T-cell (primary cell): ENCODE measurements at regions of chr1 and their contacts with region 1.

Region 1: DNA sequence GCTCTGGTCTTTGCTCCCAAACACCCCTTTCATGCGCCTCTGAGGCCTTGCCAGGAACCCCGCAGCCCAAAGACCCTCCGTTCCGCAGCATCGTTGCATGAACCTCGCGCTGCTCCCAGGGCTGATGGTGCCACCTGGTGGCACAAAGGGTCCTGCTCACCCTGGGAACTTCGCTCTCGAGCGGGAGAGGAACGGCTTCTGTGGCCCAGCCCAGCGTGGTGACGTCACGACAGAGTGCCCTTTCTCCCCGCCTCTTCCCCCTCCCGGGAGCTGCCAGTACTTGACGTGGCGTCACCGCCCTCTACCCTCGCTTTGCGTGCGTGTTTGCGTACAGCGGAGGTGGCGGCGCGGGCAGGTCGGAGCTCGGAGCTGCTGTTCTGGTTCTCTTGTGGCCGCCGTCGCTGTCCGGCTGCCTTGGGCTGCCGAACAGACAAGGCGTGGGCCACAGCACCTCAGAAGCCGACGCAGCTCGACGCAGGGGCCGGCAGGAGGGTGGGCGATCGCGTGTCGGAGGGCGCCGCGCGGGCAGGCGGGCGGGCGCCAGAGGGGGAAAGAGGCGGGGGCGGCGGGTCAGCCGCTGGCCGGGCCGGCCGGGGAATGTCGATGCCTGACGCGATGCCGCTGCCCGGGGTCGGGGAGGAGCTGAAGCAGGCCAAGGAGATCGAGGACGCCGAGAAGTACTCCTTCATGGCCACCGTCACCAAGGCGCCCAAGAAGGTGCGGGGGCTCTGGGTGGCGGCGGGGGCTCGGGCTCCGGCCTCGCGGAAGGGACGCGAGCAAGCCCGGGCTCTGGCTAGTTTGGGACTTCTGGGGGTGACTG is at the start of gene AHCYL1:
- DNase-seq: peak; percentile 97 to 100 (median 99)
- ATAC-seq: peak; percentile 98 to 99 (median 99)
- H3K4me3 ChIP-seq: peak within 1 kb of the TSS; percentile 87 to 88
- H3K4me3 Mint-ChIP-seq: peak within 1 kb of the TSS; percentile 97 to 98 (median 98)
- H3K27ac ChIP-seq: peak within 1 kb of the TSS; percentile 62
- H3K27ac Mint-ChIP-seq: peak within 1 kb of the TSS; percentile 95 to 98
- H3K4me1 ChIP-seq: peaks cover 13 to 17% of the 10 kb centered on the region in 2 experiments
- H3K4me1 Mint-ChIP-seq: peaks cover 28 to 43% (median 42%) of the 10 kb centered on the region in 3 donors
- H3K27me3 ChIP-seq: no peaks in the 10 kb centered on the region
- H3K27me3 Mint-ChIP-seq: no peaks in the 10 kb centered on the region
- total RNA-seq, gene AHCYL1: 23.0 to 41.6 (median 38.9) TPM

Region 2: DNA sequence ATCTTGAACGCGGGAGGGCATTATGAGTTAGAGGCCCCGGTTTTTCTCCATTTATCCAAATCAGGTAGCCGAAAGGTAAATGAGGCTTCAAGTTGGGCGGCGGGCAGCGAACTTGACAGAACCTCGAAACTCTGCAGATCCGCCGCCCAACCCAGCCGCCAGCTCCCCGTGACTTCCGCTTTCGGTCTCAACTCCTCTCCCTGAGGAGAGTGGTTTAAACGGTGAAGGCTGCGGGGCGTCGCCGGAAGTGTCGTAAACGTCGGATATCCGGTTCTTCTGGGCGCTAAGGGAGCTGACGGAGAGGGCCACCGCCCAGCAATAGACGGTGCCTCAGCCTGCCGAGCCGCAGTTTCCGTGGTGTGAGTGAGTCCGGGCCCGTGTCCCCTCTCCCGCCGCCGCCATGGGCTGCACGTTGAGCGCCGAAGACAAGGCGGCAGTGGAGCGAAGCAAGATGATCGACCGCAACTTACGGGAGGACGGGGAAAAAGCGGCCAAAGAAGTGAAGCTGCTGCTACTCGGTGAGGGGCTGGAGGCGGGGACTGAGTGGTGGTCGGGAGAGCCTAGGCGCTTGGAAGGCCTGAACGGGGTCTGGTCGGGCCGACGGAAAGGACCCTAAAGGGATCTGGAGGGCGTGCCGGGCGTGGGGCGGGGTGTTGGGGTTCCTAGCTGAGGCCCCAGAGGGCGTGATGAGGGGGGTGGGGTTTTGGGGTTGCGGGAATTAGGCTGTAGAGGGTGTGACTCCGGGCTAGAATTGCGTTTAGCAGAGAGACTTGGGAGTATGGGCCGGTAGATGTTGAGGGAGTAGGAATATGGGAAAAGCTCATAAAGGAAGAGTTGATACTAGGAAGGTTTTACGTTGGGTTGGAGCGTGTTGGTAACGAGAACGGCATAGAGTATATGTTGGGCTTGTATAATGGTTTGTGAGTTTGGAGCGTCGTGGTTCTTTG is 436.1 kb before region 1 on chr1 and contains the start of gene GNAI3:
- CTCF ChIA-PET with region 1: interaction called, 3 to 20 read pairs
- POLR2A ChIA-PET with region 1: no interaction called
- DNase-seq: peak; percentile 89 to 99 (median 96)
- ATAC-seq: peak; percentile 93 to 95 (median 94)
- H3K4me3 ChIP-seq: peak within 1 kb of the TSS; percentile 83 to 93
- H3K4me3 Mint-ChIP-seq: peak within 1 kb of the TSS; percentile 90 to 99 (median 95)
- H3K27ac ChIP-seq: peak within 1 kb of the TSS; percentile 80
- H3K27ac Mint-ChIP-seq: peak within 1 kb of the TSS; percentile 98 to 99
- H3K4me1 ChIP-seq: peaks cover 7 to 30% of the 10 kb centered on the region in 2 experiments
- H3K4me1 Mint-ChIP-seq: peaks cover 59 to 63% (median 61%) of the 10 kb centered on the region in 3 donors
- H3K27me3 ChIP-seq: no peaks in the 10 kb centered on the region
- H3K27me3 Mint-ChIP-seq: no peaks in the 10 kb centered on the region
- total RNA-seq, gene GNAI3: 5.4 to 7.2 (median 6.5) TPM

Region 3: GRCh38 chr1:109640285-109640865 is 344.3 kb before region 1 on chr1:
- CTCF ChIA-PET with region 1: interaction called, 8 to 33 read pairs
- POLR2A ChIA-PET with region 1: no interaction called
- DNase-seq: peak; percentile 58 to 95 (median 85)
- ATAC-seq: peak; percentile 70 to 87 (median 74)
- H3K4me3 ChIP-seq: no peak overlapping the region
- H3K4me3 Mint-ChIP-seq: no peak overlapping the region
- H3K27ac ChIP-seq: no peak overlapping the region
- H3K27ac Mint-ChIP-seq: peak overlapping the region in 1 of 2 donors; percentile 57
- H3K4me1 ChIP-seq: peaks cover 0 to 20% of the 10 kb centered on the region in 2 experiments
- H3K4me1 Mint-ChIP-seq: peaks cover 6 to 17% (median 14%) of the 10 kb centered on the region in 3 donors
- H3K27me3 ChIP-seq: peaks cover 0 to 23% of the 10 kb centered on the region in 2 experiments
- H3K27me3 Mint-ChIP-seq: no peaks in the 10 kb centered on the region

Region 4: DNA sequence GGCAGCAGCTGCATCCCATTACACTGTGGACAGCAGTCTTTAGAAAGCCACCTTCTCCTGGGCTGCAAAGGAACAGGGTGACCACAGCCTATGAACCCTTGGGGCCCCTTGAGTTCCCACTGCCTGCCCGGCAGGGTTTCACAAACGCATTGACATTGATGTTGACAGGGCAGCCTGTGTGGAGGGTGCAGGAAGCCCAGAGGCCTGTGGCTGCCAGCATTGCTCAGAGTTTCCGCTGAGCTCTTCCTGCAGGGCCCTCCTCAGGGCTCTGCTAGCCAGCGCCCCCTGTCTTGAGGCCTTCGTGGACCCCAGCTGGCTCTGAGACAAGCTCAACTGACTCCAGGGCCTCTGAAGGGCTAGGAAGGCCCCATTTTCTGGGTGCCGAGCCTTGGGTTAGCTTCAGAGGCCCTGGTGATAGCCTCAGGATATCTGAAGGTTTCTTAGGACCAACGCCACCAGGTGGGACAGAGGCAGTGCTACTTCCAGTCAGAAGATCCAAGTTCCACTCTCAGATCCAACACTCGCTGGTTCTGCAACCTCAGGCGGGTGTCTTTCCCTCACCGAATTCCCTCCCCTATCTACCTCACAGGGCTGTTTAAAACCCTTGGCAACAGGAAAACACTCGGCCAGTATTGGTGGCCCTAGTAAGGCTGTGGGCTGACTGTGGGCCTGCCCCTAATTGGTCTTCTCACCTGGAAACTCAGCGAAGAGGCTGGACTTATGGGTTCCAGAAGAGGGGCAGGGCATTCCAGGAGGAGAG is 193.8 kb before region 1 on chr1:
- CTCF ChIA-PET with region 1: interaction called, 5 to 20 read pairs
- POLR2A ChIA-PET with region 1: no interaction called
- DNase-seq: peak; percentile 59 to 85 (median 72)
- ATAC-seq: peak; percentile 95 to 99 (median 97)
- H3K4me3 ChIP-seq: no peak overlapping the region
- H3K4me3 Mint-ChIP-seq: peak overlapping the region in 1 of 3 donors; percentile 59
- H3K27ac ChIP-seq: peak overlapping the region; percentile 84
- H3K27ac Mint-ChIP-seq: peak overlapping the region; percentile 90 to 94
- H3K4me1 ChIP-seq: peaks cover 25 to 81% of the 10 kb centered on the region in 2 experiments
- H3K4me1 Mint-ChIP-seq: peaks cover 59 to 88% (median 74%) of the 10 kb centered on the region in 3 donors
- H3K27me3 ChIP-seq: no peaks in the 10 kb centered on the region
- H3K27me3 Mint-ChIP-seq: no peaks in the 10 kb centered on the region

Region 5: GRCh38 chr1:109873278-109874175 is 111.1 kb before region 1 on chr1:
- CTCF ChIA-PET with region 1: no interaction called
- POLR2A ChIA-PET with region 1: no interaction called
- DNase-seq: peak in 1 of 35 experiments; percentile 24
- ATAC-seq: no peak
- H3K4me3 ChIP-seq: no peak overlapping the region
- H3K4me3 Mint-ChIP-seq: no peak overlapping the region
- H3K27ac ChIP-seq: peak overlapping the region; percentile 11
- H3K27ac Mint-ChIP-seq: no peak overlapping the region
- H3K4me1 ChIP-seq: peaks cover 0 to 3% of the 10 kb centered on the region in 2 experiments
- H3K4me1 Mint-ChIP-seq: peaks cover 19 to 26% (median 22%) of the 10 kb centered on the region in 3 donors
- H3K27me3 ChIP-seq: peaks cover 0 to 3% of the 10 kb centered on the region in 2 experiments
- H3K27me3 Mint-ChIP-seq: peaks cover 0 to 3% of the 10 kb centered on the region in 2 donors

Region 6: GRCh38 chr1:110003747-110004630 is 19.3 kb after region 1 on chr1:
- CTCF ChIA-PET with region 1: interaction called in 1 of 2 experiments, 10 read pairs
- POLR2A ChIA-PET with region 1: interaction called in 1 of 2 experiments, 5 read pairs
- DNase-seq: peak in 8 of 35 experiments; percentile 4 to 17 (median 7)
- ATAC-seq: peak; percentile 55 to 72 (median 62)
- H3K4me3 ChIP-seq: no peak overlapping the region
- H3K4me3 Mint-ChIP-seq: peak overlapping the region; percentile 37 to 45 (median 42)
- H3K27ac ChIP-seq: no peak overlapping the region
- H3K27ac Mint-ChIP-seq: peak overlapping the region; percentile 63 to 87
- H3K4me1 ChIP-seq: peaks cover 9 to 10% of the 10 kb centered on the region in 2 experiments
- H3K4me1 Mint-ChIP-seq: peaks cover 26 to 39% (median 34%) of the 10 kb centered on the region in 3 donors
- H3K27me3 ChIP-seq: no peaks in the 10 kb centered on the region
- H3K27me3 Mint-ChIP-seq: no peaks in the 10 kb centered on the region

Region 7: DNA sequence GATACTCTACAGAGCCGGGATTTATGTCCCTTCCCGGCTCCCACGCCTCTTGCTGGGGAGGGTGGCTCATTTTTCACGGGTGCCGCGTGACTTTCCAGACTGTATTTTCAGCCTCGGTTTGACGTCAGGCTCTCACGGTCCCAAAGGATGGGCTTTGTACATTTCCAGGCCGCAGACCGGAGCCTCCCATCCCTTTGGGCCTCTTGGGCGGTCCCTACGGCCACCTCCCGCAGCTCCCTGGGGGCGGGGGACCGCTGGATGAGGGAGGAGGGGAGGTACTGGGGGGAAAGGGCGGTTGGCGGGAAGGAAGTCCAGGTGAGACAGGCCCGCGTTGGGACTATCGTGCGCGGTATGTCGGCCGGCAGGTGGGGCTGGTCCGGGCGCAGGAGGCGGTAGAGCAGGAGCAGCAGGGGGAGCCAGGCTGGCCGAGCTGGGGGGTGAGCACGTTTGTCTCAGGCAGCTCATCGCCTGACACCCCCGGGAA is 145.5 kb after region 1 on chr1:
- CTCF ChIA-PET with region 1: no interaction called
- POLR2A ChIA-PET with region 1: no interaction called
- DNase-seq: peak in 3 of 35 experiments; percentile 8 to 11 (median 8)
- ATAC-seq: no peak
- H3K4me3 ChIP-seq: no peak overlapping the region
- H3K4me3 Mint-ChIP-seq: no peak overlapping the region
- H3K27ac ChIP-seq: no peak overlapping the region
- H3K27ac Mint-ChIP-seq: no peak overlapping the region
- H3K4me1 ChIP-seq: peaks cover 0 to 6% of the 10 kb centered on the region in 2 experiments
- H3K4me1 Mint-ChIP-seq: peaks cover 0 to 4% (median 0%) of the 10 kb centered on the region in 3 donors
- H3K27me3 ChIP-seq: peaks cover 0 to 66% of the 10 kb centered on the region in 2 experiments
- H3K27me3 Mint-ChIP-seq: peaks cover 13 to 50% of the 10 kb centered on the region in 2 donors